ENCODE measurements at regions of chr4 and their contacts with region 1.

Region 1: GRCh38 chr4:153497988-153498967 is 32.1 kb downstream of the TMEM131L start:
- DNase-seq: peak in 1 of 5 donors; percentile 22
- ATAC-seq: peak; percentile 44 to 69 (median 62)
- H3K4me3 ChIP-seq: peak overlapping the region in 3 of 12 donors; percentile 8 to 17 (median 15)
- H3K27ac ChIP-seq: peak overlapping the region; percentile 3 to 67 (median 49)
- H3K4me1 ChIP-seq: peaks cover 0 to 58% (median 36%) of the 10 kb centered on the region in 12 donors
- H3K27me3 ChIP-seq: no peaks in the 10 kb centered on the region
- CTCF ChIP-seq: no peak
- POLR2A ChIP-seq: no peak

Region 2: GRCh38 chr4:153045111-153045982 is 452.9 kb before region 1 on chr4:
- intact Hi-C with region 1: no loop called
- DNase-seq: no peak
- ATAC-seq: no peak
- H3K4me3 ChIP-seq: no peak overlapping the region
- H3K27ac ChIP-seq: no peak overlapping the region
- H3K4me1 ChIP-seq: no peaks in the 10 kb centered on the region
- H3K27me3 ChIP-seq: no peaks in the 10 kb centered on the region
- CTCF ChIP-seq: no peak
- POLR2A ChIP-seq: no peak

Region 3: DNA sequence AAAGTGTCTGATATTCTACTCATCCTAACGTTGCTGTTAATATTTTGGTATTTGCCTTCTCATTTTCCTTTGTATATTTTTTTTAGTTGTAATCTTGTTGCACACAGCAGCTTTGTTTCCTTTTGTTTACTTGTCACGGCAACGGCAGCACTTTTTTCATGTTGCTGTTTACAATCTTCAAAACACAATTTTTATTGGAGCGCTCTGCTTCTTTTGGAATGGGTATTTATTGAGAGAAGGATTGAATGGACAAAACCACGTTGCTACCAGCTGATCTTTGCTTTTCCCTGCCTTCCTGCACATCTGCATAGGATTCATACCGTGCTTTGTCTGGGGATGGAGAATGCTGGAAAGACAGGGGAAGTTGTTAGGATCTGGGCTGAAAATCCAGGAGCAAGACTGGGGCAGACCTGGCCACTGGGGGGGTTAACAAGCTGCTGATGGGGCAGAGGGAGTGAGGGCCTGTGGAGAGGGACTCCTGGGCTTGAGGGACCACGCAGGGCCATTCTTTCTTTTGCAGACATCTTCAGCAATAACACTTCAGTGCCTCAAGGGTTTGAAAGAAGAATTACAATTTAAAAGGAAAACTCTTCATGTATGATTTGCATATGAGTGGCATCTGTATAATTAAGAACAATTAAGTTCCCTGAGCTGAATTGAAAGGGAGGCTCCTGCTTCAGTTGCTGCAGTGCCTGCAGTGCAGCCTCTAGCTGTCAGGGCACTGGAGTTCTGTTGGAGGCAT is 37.7 kb after region 1 on chr4:
- intact Hi-C with region 1: loop called in 1 of 10 experiments (anchors 5 kb)
- DNase-seq: no peak
- ATAC-seq: no peak
- H3K4me3 ChIP-seq: no peak overlapping the region
- H3K27ac ChIP-seq: peak overlapping the region in 1 of 12 donors; percentile 10
- H3K4me1 ChIP-seq: peaks cover 4 to 83% (median 57%) of the 10 kb centered on the region in 12 donors
- H3K27me3 ChIP-seq: no peaks in the 10 kb centered on the region
- CTCF ChIP-seq: peak in 1 of 12 donors; percentile 8
- POLR2A ChIP-seq: no peak